Tibial artery (tissue), 4 donors: ENCODE measurements at regions of chr22 and their contacts with region 1.

Region 1: DNA sequence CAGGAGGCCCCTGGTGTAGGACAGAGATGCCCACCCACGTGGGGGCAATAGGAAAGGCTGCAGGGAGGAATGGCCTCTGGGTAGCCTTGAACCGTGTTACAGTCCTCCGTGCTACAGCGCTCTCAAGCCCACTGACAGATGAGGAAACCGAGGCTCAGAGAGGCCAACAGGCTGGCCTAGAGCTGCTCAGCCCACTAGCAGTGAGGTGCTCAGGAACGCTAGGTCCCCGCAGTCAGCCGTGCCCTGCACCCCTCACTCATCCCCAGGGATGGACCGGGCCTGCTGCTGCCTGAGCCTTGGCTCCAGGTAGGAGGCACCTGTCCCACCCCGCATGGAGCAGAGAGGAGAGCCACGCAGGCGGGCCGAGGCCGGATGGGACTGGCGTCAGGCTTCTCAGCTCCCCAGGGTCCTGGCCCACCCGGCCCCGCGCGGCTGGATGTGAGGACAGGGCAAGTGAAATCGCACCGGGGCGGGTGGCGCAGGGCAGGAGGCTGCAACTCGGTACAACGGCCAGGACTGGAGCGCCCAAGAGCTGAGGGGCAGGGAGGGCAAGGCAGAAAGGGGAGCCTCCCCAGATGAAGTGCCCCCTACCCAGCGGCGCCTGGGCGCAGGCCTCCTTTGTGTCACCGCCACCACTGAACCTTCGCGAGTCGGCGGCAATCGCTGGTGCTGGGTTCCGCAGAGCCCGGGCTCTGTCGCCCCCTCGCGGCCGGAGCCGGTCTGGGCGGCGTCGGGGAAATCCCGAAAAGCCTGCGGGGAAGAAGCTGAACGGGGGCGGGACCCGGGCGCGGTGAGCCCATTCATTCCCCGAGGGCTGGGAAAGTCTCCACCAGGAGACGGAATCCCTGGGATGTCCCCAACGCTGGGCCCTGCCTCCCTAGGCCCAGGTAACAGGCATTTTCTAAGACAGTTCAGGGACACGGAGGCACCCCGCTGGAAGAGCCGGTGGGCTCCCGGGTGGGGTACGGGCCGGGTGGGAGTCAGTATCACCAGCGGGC is 8.4 kb upstream of the SLC2A11 start:
- DNase-seq: peak; percentile 71 to 90
- H3K4me3 ChIP-seq: no peak overlapping the region
- H3K27ac ChIP-seq: no peak overlapping the region
- H3K4me1 ChIP-seq: peaks cover 0 to 26% (median 11%) of the 10 kb centered on the region in 4 donors
- H3K27me3 ChIP-seq: peaks cover 0 to 5% of the 10 kb centered on the region in 2 donors
- CTCF ChIP-seq: peak; percentile 93 to 96

Region 2: DNA sequence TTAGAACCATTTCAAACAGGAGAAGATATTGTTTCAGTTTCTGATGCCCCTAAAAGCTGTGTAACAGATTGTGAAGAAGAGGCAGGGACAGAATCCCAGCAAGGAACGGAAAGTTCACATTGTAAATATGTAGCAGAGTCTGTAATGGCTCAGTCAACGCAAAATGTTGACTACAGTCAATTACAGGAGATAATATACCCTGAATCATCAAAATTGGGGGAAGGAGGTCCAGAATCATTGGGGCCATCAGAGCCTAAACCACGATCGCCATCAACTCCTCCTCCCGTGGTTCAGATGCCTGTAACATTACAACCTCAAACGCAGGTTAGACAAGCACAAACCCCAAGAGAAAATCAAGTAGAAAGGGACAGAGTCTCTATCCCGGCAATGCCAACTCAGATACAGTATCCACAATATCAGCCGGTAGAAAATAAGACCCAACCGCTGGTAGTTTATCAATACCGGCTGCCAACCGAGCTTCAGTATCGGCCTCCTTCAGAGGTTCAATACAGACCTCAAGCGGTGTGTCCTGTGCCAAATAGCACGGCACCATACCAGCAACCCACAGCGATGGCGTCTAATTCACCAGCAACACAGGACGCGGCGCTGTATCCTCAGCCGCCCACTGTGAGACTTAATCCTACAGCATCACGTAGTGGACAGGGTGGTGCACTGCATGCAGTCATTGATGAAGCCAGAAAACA is 310.0 kb before region 1 on chr22:
- intact Hi-C with region 1: loop called (anchors 5 kb)
- DNase-seq: peak; percentile 85 to 86
- H3K4me3 ChIP-seq: no peak overlapping the region
- H3K27ac ChIP-seq: no peak overlapping the region
- H3K4me1 ChIP-seq: peaks cover 0 to 8% (median 2%) of the 10 kb centered on the region in 4 donors
- H3K27me3 ChIP-seq: peaks cover 0 to 2% of the 10 kb centered on the region in 2 donors
- CTCF ChIP-seq: peak; percentile 84 to 94

Region 3: GRCh38 chr22:23716811-23717801 is 132.2 kb before region 1 on chr22:
- intact Hi-C with region 1: loop called (anchors 5 kb)
- DNase-seq: peak; percentile 76 to 88
- H3K4me3 ChIP-seq: peak overlapping the region; percentile 62 to 98
- H3K27ac ChIP-seq: peak overlapping the region; percentile 67 to 78
- H3K4me1 ChIP-seq: peaks cover 0 to 16% (median 14%) of the 10 kb centered on the region in 4 donors
- H3K27me3 ChIP-seq: no peaks in the 10 kb centered on the region
- CTCF ChIP-seq: no peak

Region 4: DNA sequence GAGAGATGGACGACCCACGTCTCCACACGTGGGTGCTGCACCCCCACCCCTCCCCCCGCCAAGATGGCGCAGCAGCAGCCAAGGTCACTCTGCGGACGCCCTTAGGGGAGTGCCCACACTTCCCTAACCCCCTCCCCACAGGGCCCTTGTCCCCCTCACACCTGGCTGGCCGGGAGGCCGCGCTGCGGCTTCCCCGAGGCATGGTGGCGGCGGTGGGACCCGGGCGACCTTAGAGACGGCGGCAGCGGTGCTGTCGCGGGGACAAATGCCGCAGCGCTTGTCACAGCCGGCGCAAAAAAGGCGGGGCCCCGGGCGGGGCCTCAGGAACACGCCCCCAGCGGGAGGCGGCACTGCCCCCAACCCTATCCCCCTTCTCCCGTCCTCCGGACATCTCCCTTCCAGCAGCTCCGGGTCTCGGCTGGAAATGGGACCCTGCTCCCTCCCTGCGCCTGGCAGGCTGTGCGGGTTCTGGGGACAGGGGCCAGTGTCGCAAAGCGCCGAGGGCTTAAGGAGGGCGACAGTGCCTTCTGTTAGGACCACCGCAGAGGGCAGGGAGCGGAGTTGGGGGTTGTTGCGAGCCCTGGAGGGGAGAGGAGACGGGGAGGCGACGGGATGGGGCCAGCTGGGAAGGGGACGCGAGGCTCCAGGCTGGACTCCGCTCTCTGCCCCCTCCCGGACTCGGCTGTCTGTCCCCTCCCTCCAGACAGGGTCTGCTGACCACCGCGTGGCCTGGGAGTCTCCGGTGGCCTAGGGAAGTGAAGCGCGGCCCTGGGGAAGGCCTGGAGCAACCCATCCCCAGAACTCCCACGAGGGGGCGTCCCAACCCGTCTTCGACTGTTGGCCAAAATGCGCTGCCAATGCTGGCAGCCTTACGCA is 81.4 kb before region 1 on chr22 and contains the start of gene CHCHD10:
- intact Hi-C with region 1: loop called (anchors 5 kb)
- DNase-seq: peak; percentile 68 to 90
- H3K4me3 ChIP-seq: peak within 1 kb of the TSS; percentile 58 to 88
- H3K27ac ChIP-seq: peak within 1 kb of the TSS; percentile 67 to 88
- H3K4me1 ChIP-seq: peaks cover 0 to 69% (median 43%) of the 10 kb centered on the region in 4 donors
- H3K27me3 ChIP-seq: no peaks in the 10 kb centered on the region
- CTCF ChIP-seq: peak; percentile 84 to 91

Region 5: GRCh38 chr22:23913661-23914353 is 64.5 kb after region 1 on chr22:
- intact Hi-C with region 1: no loop called
- DNase-seq: peak; percentile 100
- H3K4me3 ChIP-seq: peak overlapping the region; percentile 52 to 57
- H3K27ac ChIP-seq: peak overlapping the region; percentile 76 to 82
- H3K4me1 ChIP-seq: peaks cover 0 to 7% (median 3%) of the 10 kb centered on the region in 4 donors
- H3K27me3 ChIP-seq: no peaks in the 10 kb centered on the region
- CTCF ChIP-seq: no peak